Activated naive CD4-positive, alpha-beta T cell treated with anti-CD3 and anti-CD28 coated beads for 36 hours (primary cell): ENCODE measurements at regions of chr1 and their contacts with region 1.

Region 1: GRCh38 chr1:37514350-37515184 is at the start of gene MEAF6:
- DNase-seq: peak; percentile 81
- H3K4me3 Mint-ChIP-seq: peak within 1 kb of the TSS; percentile 91
- H3K27ac Mint-ChIP-seq: peak within 1 kb of the TSS; percentile 95
- H3K4me1 Mint-ChIP-seq: peaks cover 40% of the 10 kb centered on the region
- H3K27me3 Mint-ChIP-seq: no peaks in the 10 kb centered on the region
- total RNA-seq, gene MEAF6: 57.5 to 62.8 TPM

Region 2: GRCh38 chr1:37238364-37239224 is 276.0 kb before region 1 on chr1:
- CTCF ChIA-PET with region 1: no interaction called
- intact Hi-C with region 1: no loop called
- DNase-seq: no peak
- H3K4me3 Mint-ChIP-seq: no peak overlapping the region
- H3K27ac Mint-ChIP-seq: no peak overlapping the region
- H3K4me1 Mint-ChIP-seq: no peaks in the 10 kb centered on the region
- H3K27me3 Mint-ChIP-seq: peaks cover 23% of the 10 kb centered on the region

Region 3: DNA sequence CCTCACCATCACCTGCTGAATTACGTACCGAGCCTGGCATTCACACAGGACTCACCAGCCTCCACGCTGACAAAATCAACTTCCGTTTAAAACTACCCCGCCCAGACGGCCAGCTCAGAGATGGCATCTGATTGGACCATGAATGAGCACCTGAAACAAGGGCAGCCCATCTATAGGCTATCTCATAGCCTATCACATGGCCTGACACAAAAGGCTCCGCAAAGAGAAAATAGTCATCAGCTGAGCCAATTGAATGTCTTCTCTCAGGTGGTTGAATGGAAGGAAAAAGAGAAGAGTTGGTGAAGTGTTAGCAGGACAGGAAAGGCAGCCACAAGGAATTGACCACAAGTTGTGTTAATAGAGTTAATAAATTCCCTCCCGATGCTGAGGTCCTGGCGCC is 90.8 kb before region 1 on chr1:
- CTCF ChIA-PET with region 1: no interaction called
- intact Hi-C with region 1: no loop called
- DNase-seq: no peak
- H3K4me3 Mint-ChIP-seq: no peak overlapping the region
- H3K27ac Mint-ChIP-seq: no peak overlapping the region
- H3K4me1 Mint-ChIP-seq: no peaks in the 10 kb centered on the region
- H3K27me3 Mint-ChIP-seq: peaks cover 13% of the 10 kb centered on the region

Region 4: GRCh38 chr1:37553927-37554808 is 39.6 kb after region 1 on chr1 and contains the start of gene SNIP1:
- CTCF ChIA-PET with region 1: no interaction called
- intact Hi-C with region 1: loop called (anchors 1 kb)
- DNase-seq: peak; percentile 95
- H3K4me3 Mint-ChIP-seq: peak within 1 kb of the TSS; percentile 91
- H3K27ac Mint-ChIP-seq: peak within 1 kb of the TSS; percentile 86
- H3K4me1 Mint-ChIP-seq: peaks cover 44% of the 10 kb centered on the region
- H3K27me3 Mint-ChIP-seq: no peaks in the 10 kb centered on the region
- total RNA-seq, gene SNIP1: 14.3 to 15.3 TPM